ENCODE measurements at regions of chr14 and their contacts with region 1.

Region 1: GRCh38 chr14:35404449-35405303 is at the start of gene NFKBIA:
- DNase-seq: peak; percentile 89 to 93
- H3K4me3 ChIP-seq: peak within 1 kb of the TSS; percentile 83 to 99
- H3K27ac ChIP-seq: peak within 1 kb of the TSS; percentile 98 to 100
- H3K4me1 ChIP-seq: peaks cover 8% of the 10 kb centered on the region in 2 donors
- H3K27me3 ChIP-seq: no peaks in the 10 kb centered on the region
- CTCF ChIP-seq: peak in 3 of 4 experiments; percentile 11 to 65 (median 41)
- POLR2A ChIP-seq: peak; percentile 85 to 97
- total RNA-seq, gene NFKBIA: 112 to 387 (median 295) TPM

Region 2: GRCh38 chr14:35261774-35262173 is 142.9 kb before region 1 on chr14:
- intact Hi-C with region 1: loop called (anchors 5 kb)
- DNase-seq: no peak
- H3K4me3 ChIP-seq: no peak overlapping the region
- H3K27ac ChIP-seq: no peak overlapping the region
- H3K4me1 ChIP-seq: no peaks in the 10 kb centered on the region
- H3K27me3 ChIP-seq: no peaks in the 10 kb centered on the region
- CTCF ChIP-seq: peak; percentile 16 to 47 (median 36)
- POLR2A ChIP-seq: no peak

Region 3: GRCh38 chr14:35336494-35337268 is 68.0 kb before region 1 on chr14:
- intact Hi-C with region 1: loop called (anchors 2 kb)
- DNase-seq: peak; percentile 97 to 98
- H3K4me3 ChIP-seq: no peak overlapping the region
- H3K27ac ChIP-seq: peak overlapping the region; percentile 94 to 95
- H3K4me1 ChIP-seq: peaks cover 23 to 34% of the 10 kb centered on the region in 2 donors
- H3K27me3 ChIP-seq: no peaks in the 10 kb centered on the region
- CTCF ChIP-seq: peak in 2 of 4 experiments; percentile 3 to 15
- POLR2A ChIP-seq: peak; percentile 51 to 73

Region 4: DNA sequence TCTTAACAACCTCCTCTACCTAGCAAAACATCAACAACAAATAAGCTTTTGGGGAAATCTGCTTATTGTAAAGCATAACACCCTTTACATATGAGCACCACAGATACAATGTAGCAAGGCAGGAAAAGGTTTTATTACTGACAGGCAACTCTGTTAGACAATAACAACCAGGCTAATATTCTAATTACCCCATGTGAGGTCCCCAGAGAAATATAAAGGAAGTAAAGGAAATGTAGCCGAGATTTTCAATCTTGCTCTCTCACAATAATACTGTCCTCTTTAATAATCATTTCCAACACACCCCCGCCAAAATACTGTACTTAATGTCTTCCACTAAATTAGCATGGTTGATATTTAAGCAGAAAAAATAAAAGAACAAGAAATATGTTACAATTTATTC is 115.3 kb after region 1 on chr14:
- intact Hi-C with region 1: no loop called
- DNase-seq: no peak
- H3K4me3 ChIP-seq: no peak overlapping the region
- H3K27ac ChIP-seq: no peak overlapping the region
- H3K4me1 ChIP-seq: no peaks in the 10 kb centered on the region
- H3K27me3 ChIP-seq: no peaks in the 10 kb centered on the region
- CTCF ChIP-seq: no peak
- POLR2A ChIP-seq: no peak